Activated CD4-positive, alpha-beta T cell treated with anti-CD3 and anti-CD28 coated beads for 36 hours (primary cell): ENCODE measurements at regions of chr3 and their contacts with region 1.

Region 1: GRCh38 chr3:33023172-33024136 is 72.0 kb downstream of the CCR4 start:
- DNase-seq: no peak
- ATAC-seq: peak; percentile 85
- H3K4me3 Mint-ChIP-seq: peak overlapping the region; percentile 34
- H3K27ac Mint-ChIP-seq: peak overlapping the region; percentile 91
- H3K4me1 Mint-ChIP-seq: peaks cover 56% of the 10 kb centered on the region
- H3K27me3 Mint-ChIP-seq: no peaks in the 10 kb centered on the region

Region 2: GRCh38 chr3:32960404-32961170 is 62.9 kb before region 1 on chr3:
- CTCF ChIA-PET with region 1: interaction called, 4 read pairs
- POLR2A ChIA-PET with region 1: interaction called, 5 read pairs
- intact Hi-C with region 1: loop called (anchors 1 kb)
- DNase-seq: no peak
- ATAC-seq: peak; percentile 61
- H3K4me3 Mint-ChIP-seq: peak overlapping the region; percentile 8
- H3K27ac Mint-ChIP-seq: peak overlapping the region; percentile 97
- H3K4me1 Mint-ChIP-seq: peaks cover 77% of the 10 kb centered on the region
- H3K27me3 Mint-ChIP-seq: no peaks in the 10 kb centered on the region

Region 3: GRCh38 chr3:32992322-32992692 is 31.1 kb before region 1 on chr3:
- CTCF ChIA-PET with region 1: interaction called, 4 read pairs
- POLR2A ChIA-PET with region 1: interaction called, 5 read pairs
- intact Hi-C with region 1: loop called (anchors 1 kb)
- DNase-seq: no peak
- ATAC-seq: peak; percentile 6
- H3K4me3 Mint-ChIP-seq: peak overlapping the region; percentile 62
- H3K27ac Mint-ChIP-seq: peak overlapping the region; percentile 95
- H3K4me1 Mint-ChIP-seq: peaks cover 80% of the 10 kb centered on the region
- H3K27me3 Mint-ChIP-seq: peaks cover 2% of the 10 kb centered on the region

Region 4: DNA sequence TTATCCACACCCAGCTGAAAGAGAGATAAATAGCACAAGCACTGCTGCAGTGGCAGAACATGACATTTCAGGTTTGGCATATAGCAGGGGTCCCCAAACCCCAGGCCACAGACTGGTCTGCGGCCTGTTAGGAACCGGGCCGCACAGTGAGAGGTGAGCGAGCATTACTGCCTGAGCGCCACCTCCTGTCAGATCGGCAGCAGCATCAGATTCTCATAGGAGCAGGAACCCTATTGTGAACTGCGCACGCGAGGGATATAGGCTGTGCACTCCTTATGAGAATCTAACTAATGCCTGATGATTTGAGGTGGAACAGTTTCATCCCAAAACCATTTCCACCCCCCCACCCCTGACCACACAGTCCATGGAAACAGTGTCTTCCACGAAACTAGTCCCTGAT is 17.4 kb before region 1 on chr3:
- CTCF ChIA-PET with region 1: interaction called, 5 read pairs
- POLR2A ChIA-PET with region 1: interaction called, 3 read pairs
- intact Hi-C with region 1: loop called (anchors 1 kb)
- DNase-seq: no peak
- ATAC-seq: no peak
- H3K4me3 Mint-ChIP-seq: no peak overlapping the region
- H3K27ac Mint-ChIP-seq: peak overlapping the region; percentile 43
- H3K4me1 Mint-ChIP-seq: peaks cover 54% of the 10 kb centered on the region
- H3K27me3 Mint-ChIP-seq: no peaks in the 10 kb centered on the region

Region 5: GRCh38 chr3:33047842-33048834 is 24.7 kb after region 1 on chr3:
- CTCF ChIA-PET with region 1: interaction called, 4 read pairs
- POLR2A ChIA-PET with region 1: interaction called, 3 read pairs
- intact Hi-C with region 1: loop called in 1 of 2 experiments (anchors 1 kb)
- DNase-seq: peak; percentile 65
- ATAC-seq: peak; percentile 84
- H3K4me3 Mint-ChIP-seq: peak overlapping the region; percentile 29
- H3K27ac Mint-ChIP-seq: peak overlapping the region; percentile 94
- H3K4me1 Mint-ChIP-seq: peaks cover 74% of the 10 kb centered on the region
- H3K27me3 Mint-ChIP-seq: no peaks in the 10 kb centered on the region

Region 6: DNA sequence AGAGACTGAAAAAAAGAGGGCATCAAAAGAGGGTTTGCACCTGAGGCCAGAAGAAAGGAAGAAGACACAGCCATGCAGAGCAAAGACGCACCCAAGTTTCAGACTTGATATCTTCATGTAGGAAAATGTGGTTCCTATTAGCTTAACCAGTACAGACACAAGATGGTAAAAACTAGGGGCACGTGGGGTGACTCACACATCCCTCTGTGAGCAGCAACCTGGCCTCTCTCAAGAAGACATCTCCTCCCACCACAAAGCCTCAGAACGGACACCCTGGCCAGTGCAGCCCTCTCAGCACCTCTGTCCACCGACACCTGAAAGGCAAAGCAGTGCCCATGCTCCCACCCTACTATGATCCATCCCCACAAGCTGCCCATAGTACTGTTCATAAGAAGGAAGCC is 40.2 kb after region 1 on chr3:
- CTCF ChIA-PET with region 1: interaction called, 23 read pairs
- POLR2A ChIA-PET with region 1: interaction called, 22 read pairs
- intact Hi-C with region 1: loop called (anchors 1 kb)
- DNase-seq: peak; percentile 83
- ATAC-seq: peak; percentile 57
- H3K4me3 Mint-ChIP-seq: peak overlapping the region; percentile 34
- H3K27ac Mint-ChIP-seq: peak overlapping the region; percentile 97
- H3K4me1 Mint-ChIP-seq: peaks cover 70% of the 10 kb centered on the region
- H3K27me3 Mint-ChIP-seq: no peaks in the 10 kb centered on the region

Region 7: DNA sequence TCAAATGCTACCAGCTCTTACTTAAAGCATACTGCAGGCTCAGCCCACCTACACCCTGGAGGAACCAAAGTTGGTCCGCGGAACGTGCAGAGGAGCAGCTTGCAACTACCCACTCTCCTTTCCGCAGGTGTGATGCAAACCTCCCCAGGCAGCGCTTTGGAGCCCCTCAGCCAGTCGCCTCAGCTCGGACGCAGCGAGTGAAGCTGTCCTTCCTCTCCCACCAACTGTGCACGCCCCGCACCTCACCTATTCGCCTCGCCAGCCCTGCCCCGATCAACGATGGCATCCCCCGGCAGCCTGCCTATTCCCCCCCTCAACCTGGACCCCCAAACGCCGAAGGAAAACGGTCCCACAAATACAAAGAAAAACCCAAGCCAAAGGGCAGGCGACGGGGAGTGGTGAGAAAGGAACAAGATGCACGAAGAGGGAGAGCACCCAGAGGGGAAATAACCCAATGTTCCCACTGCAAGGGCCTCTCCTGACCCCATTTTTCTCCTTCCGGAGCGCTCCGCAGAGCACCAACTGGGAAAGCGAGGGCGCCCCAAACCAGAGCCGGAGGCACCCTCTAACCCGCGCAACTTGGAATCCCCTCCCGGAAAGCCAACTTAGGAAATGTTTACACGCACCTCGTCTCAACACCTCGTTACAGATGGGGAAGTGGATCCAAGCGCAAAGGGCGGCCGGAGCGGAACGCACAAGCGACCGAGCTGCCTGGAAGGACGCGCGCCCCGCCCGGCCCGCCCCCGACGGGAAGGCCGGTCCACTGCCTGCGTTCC is 72.8 kb after region 1 on chr3:
- CTCF ChIA-PET with region 1: no interaction called
- POLR2A ChIA-PET with region 1: no interaction called
- intact Hi-C with region 1: loop called in 1 of 2 experiments (anchors 1 kb)
- DNase-seq: peak; percentile 66
- ATAC-seq: peak; percentile 46
- H3K4me3 Mint-ChIP-seq: peak overlapping the region; percentile 99
- H3K27ac Mint-ChIP-seq: peak overlapping the region; percentile 92
- H3K4me1 Mint-ChIP-seq: peaks cover 40% of the 10 kb centered on the region
- H3K27me3 Mint-ChIP-seq: no peaks in the 10 kb centered on the region

Region 8: GRCh38 chr3:33513262-33513863 is 489.9 kb after region 1 on chr3:
- CTCF ChIA-PET with region 1: no interaction called
- POLR2A ChIA-PET with region 1: no interaction called
- intact Hi-C with region 1: no loop called
- DNase-seq: no peak
- ATAC-seq: no peak
- H3K4me3 Mint-ChIP-seq: no peak overlapping the region
- H3K27ac Mint-ChIP-seq: no peak overlapping the region
- H3K4me1 Mint-ChIP-seq: no peaks in the 10 kb centered on the region
- H3K27me3 Mint-ChIP-seq: no peaks in the 10 kb centered on the region